Ascending aorta (tissue), 2 donors: ENCODE measurements at regions of chr18 and their contacts with region 1.

Region 1: DNA sequence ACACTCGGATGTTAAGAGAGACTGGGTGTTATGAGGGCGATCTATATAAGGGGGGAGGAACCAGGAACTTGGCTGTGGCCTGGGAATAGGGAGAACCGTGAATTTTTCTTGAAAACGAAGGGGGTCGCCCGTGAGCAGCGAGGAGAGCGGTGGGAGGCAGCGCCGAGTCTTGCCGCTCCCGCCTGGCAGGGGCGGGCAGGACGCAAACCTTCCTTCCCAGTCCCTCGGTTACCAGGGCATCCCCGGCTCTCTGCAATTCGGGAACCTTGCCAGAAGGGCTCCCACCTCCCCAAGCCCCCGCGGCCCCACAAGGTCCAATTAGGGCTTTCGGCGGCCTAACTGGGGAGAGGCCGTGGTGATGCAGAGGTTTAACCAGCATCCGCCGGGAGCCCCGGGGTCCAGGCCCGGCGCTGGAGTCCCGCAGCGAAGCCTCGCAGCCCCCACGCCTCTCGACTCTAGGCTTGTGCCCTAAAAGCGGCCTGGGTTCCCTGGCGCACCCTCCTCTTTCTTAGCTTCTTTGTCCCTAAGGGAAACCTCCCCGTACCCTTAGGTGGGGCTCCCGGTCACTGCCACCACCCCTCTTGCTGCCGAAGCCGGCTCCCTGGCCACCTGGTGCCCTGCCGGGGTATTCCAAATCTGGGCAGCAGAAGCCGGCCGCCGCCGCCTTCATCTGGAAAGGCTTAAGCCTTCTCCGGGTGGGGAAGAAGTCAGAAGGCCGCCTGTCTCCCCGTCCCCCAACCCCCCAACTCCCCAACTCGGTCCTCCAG is 680 bp upstream of the FHOD3 start:
- DNase-seq: peak in 1 of 2 donors; percentile 83
- H3K4me3 ChIP-seq: peak overlapping the region; percentile 91 to 99
- H3K27ac ChIP-seq: peak overlapping the region; percentile 77 to 84
- H3K4me1 ChIP-seq: peaks cover 2 to 5% of the 10 kb centered on the region in 2 donors
- H3K27me3 ChIP-seq: no peaks in the 10 kb centered on the region
- CTCF ChIP-seq: peak in 2 of 3 experiments; percentile 53 to 66

Region 2: DNA sequence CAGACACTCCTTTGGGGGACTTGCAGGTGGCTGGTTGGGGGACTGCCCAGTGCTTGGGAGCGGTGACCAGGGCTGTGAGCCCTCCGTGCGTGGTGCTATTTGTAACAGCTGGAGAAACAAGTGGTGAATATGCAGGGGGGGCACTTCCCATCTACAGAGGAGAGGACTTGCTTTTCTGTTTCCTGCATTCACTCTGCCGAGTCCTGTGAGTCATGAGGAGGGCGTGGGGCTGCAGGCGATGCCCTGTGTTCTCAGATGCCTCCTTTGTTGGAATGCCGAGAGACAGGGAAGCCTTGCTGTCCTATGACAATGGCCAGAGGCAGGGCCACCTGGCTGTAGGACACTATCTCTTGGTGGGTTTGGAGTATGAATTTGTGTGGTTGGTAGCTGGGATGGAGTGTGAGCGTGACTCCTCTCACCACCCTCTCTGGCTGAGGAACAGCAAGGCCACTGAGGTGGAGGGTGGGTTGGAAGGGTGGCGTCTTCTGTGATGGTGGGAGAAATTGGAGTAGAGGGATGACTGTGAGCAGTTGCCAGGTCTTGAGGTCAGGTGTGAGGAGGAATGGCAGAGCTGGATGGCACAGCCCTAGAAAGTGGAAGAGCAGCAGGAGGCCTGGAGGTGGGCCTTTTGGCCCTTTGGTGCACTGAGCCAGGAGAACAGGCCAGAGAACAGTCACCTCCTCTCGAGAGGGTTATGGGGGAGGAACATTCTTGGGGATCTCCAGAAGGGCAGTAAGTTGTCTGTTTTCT is 25.0 kb after region 1 on chr18:
- intact Hi-C with region 1: no loop called
- DNase-seq: no peak
- H3K4me3 ChIP-seq: no peak overlapping the region
- H3K27ac ChIP-seq: no peak overlapping the region
- H3K4me1 ChIP-seq: peaks cover 0 to 3% of the 10 kb centered on the region in 2 donors
- H3K27me3 ChIP-seq: no peaks in the 10 kb centered on the region
- CTCF ChIP-seq: no peak

Region 3: DNA sequence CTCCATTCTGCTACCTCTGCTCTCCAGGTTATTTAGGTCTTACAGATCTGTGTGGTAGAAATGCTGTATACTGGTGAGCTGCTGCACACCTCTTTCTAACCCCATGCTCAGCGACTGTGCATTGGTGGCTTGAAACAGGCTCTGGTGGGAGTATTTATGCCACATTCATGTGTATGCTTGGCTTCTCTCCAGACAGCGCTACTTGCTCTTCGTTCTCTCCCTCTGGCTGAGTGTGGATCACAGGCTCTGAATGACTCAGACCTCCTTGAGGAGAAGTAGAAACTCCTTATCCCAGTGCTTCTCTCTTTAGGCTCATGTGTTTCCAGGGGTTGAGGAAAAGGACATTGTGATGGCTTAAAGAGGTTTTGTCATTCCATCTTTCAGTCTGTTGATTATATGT is 55.6 kb after region 1 on chr18:
- intact Hi-C with region 1: loop called (anchors 5 kb)
- DNase-seq: peak in 1 of 2 donors; percentile 75
- H3K4me3 ChIP-seq: no peak overlapping the region
- H3K27ac ChIP-seq: peak overlapping the region in 1 of 2 donors; percentile 14
- H3K4me1 ChIP-seq: peaks cover 0 to 15% of the 10 kb centered on the region in 2 donors
- H3K27me3 ChIP-seq: no peaks in the 10 kb centered on the region
- CTCF ChIP-seq: no peak

Region 4: GRCh38 chr18:36411745-36412168 is 114.9 kb after region 1 on chr18:
- intact Hi-C with region 1: loop called (anchors 5 kb)
- DNase-seq: no peak
- H3K4me3 ChIP-seq: no peak overlapping the region
- H3K27ac ChIP-seq: no peak overlapping the region
- H3K4me1 ChIP-seq: peaks cover 0 to 20% of the 10 kb centered on the region in 2 donors
- H3K27me3 ChIP-seq: no peaks in the 10 kb centered on the region
- CTCF ChIP-seq: no peak

Region 5: DNA sequence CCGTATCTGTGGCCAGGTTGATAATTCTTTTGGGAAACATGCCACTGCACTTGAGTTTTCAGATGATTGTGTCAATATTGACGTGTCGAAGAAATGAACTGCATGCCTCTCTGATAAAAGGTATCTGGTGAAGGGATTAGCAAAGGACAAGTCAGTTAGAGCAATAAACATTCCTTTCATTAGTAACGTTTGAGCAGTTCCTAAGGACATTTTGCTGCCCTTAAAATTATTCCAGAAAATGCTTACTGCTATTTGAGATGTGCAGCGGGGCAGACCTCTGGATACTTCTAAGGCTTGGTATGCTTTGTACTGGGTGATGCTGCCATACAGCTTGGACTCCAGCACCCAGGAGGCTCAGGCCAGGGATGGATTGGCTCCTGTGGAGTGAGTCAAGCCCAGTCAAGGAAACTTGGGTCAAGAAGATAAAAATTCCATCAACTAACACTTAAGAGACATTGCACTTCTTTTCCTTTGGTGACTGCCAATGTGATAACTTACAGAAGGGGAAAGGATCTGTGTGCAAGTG is 167.4 kb after region 1 on chr18:
- intact Hi-C with region 1: loop called (anchors 10 kb)
- DNase-seq: peak in 1 of 2 donors; percentile 43
- H3K4me3 ChIP-seq: no peak overlapping the region
- H3K27ac ChIP-seq: no peak overlapping the region
- H3K4me1 ChIP-seq: no peaks in the 10 kb centered on the region
- H3K27me3 ChIP-seq: no peaks in the 10 kb centered on the region
- CTCF ChIP-seq: no peak

Region 6: GRCh38 chr18:36757081-36757480 is 460.2 kb after region 1 on chr18:
- intact Hi-C with region 1: loop called (anchors 5 kb)
- DNase-seq: no peak
- H3K4me3 ChIP-seq: no peak overlapping the region
- H3K27ac ChIP-seq: peak overlapping the region in 1 of 2 donors; percentile 19
- H3K4me1 ChIP-seq: peaks cover 0 to 4% of the 10 kb centered on the region in 2 donors
- H3K27me3 ChIP-seq: no peaks in the 10 kb centered on the region
- CTCF ChIP-seq: peak; percentile 58 to 63 (median 62)

Region 7: GRCh38 chr18:36780748-36781147 is 483.9 kb after region 1 on chr18:
- intact Hi-C with region 1: no loop called
- DNase-seq: no peak
- H3K4me3 ChIP-seq: no peak overlapping the region
- H3K27ac ChIP-seq: no peak overlapping the region
- H3K4me1 ChIP-seq: peaks cover 0 to 3% of the 10 kb centered on the region in 2 donors
- H3K27me3 ChIP-seq: no peaks in the 10 kb centered on the region
- CTCF ChIP-seq: no peak